MCF 10A (cell line): ENCODE measurements at regions of chr2 and their contacts with region 1.

Region 1: DNA sequence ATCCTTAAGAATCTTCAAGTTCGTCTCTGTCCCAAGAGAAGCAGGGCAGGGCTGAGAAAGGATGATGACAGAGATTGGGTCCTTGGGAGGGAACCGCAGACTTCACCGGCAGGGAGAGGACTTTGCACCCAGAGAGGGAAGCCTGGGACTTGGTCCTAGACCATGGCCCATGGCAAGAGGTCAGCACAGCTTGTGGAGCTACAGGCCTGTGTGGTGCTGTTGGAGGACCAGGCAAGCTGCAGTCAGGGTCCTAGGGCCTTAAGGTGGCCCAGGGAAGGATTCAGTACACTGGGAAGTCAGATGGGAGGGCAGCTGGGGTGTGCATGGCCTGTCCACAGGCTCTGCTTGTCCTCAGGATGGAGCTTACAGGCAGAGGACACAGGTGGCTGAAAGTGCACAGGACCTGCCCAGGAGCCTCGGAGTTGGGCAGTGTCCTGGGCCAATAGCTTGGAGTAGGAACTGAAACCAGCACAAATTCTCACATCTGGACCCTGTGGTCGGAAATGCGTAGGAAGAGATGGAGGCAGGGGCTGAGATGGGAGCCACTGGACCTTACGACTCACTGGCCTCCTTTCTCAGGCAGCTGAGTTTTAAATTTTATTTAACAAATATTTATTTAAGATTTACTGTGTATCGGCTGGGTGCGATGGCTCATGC is 56.4 kb upstream of the TCF7L1 start:
- DNase-seq: no peak
- H3K4me3 Mint-ChIP-seq: no peak overlapping the region
- H3K27ac Mint-ChIP-seq: no peak overlapping the region
- H3K4me1 Mint-ChIP-seq: no peaks in the 10 kb centered on the region
- H3K27me3 Mint-ChIP-seq: peaks cover 24% of the 10 kb centered on the region
- CTCF ChIP-seq: no peak

Region 2: GRCh38 chr2:85282914-85283313 is 206.2 kb after region 1 on chr2:
- CTCF ChIA-PET with region 1: interaction called, 11 read pairs
- POLR2A ChIA-PET with region 1: interaction called, 5 read pairs
- intact Hi-C with region 1: no loop called
- DNase-seq: no peak
- H3K4me3 Mint-ChIP-seq: no peak overlapping the region
- H3K27ac Mint-ChIP-seq: no peak overlapping the region
- H3K4me1 Mint-ChIP-seq: peaks cover 18% of the 10 kb centered on the region
- H3K27me3 Mint-ChIP-seq: no peaks in the 10 kb centered on the region
- CTCF ChIP-seq: no peak

Region 3: DNA sequence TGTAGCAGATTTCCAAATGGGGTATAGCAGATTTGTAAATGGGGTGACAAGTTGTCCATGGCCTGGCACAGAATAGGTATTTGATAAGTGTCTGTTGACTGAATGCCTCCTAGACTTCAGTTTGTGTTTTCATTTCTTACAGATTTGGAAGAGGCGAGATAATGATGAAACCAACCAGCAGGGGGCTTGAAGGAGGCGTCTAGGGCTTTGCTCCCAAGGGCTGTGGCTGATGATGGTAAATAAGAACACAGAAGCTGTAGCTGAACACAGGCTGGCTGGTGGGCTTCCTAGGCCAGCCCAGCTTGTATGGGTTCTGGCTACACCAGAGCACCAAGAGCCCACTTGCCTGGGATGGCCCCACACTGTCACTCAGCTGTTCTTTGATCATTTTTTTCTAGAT is 571.9 kb after region 1 on chr2:
- CTCF ChIA-PET with region 1: no interaction called
- POLR2A ChIA-PET with region 1: no interaction called
- intact Hi-C with region 1: no loop called
- DNase-seq: peak; percentile 69
- H3K4me3 Mint-ChIP-seq: no peak overlapping the region
- H3K27ac Mint-ChIP-seq: peak overlapping the region; percentile 18
- H3K4me1 Mint-ChIP-seq: peaks cover 10% of the 10 kb centered on the region
- H3K27me3 Mint-ChIP-seq: no peaks in the 10 kb centered on the region
- CTCF ChIP-seq: peak; percentile 20